Activated CD4-positive, alpha-beta T cell treated with anti-CD3 and anti-CD28 coated beads for 36 hours (primary cell): ENCODE measurements at regions of chr16 and their contacts with region 1.

Region 1: DNA sequence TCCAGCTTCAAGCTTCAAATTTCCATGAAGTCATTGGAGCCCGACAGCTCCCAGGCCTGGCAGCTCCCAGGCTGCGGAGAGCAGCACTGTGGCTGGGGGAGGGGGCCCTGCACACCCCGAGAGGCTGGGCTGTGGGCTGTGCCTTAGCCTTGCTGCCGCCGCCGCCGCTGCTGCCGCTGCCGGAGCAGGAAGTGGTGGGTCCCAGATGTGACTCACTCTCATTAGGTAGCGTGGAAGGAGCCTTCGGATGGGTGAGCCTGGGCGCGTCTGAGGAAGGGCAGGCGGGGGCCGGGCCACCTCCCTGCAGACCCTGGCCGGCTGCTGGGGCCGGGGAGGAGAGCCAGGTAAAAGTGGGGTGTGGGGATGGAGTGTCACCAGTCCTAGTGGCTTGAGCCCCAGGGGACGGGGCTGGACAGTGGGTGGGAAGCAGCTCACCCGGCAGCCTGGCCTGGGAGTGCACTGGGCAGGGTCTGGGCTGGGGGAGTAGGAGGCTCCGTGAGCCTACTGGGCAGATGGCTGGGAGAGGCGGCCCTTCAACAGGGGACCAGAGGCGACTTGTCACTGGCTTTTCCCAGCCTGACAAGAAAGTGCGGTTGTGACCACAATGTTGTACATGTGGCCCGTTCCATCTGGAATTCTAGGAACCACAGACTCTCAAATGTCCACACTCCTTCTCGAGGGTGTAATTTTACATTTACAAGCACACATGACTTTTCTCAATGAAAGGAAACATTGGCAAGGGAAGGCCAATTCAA is at the start of gene ADCY7:
- DNase-seq: peak; percentile 92
- ATAC-seq: peak; percentile 83
- H3K4me3 Mint-ChIP-seq: peak within 1 kb of the TSS; percentile 87
- H3K27ac Mint-ChIP-seq: peak within 1 kb of the TSS; percentile 98
- H3K4me1 Mint-ChIP-seq: peaks cover 70% of the 10 kb centered on the region
- H3K27me3 Mint-ChIP-seq: no peaks in the 10 kb centered on the region
- total RNA-seq, gene ADCY7: 51.8 to 85.3 TPM

Region 2: GRCh38 chr16:50065624-50066481 is 200.7 kb before region 1 on chr16 and contains the start of gene HEATR3:
- CTCF ChIA-PET with region 1: interaction called, 3 read pairs
- POLR2A ChIA-PET with region 1: no interaction called
- intact Hi-C with region 1: loop called in 1 of 2 experiments (anchors 2 kb)
- DNase-seq: peak; percentile 97
- ATAC-seq: peak; percentile 86
- H3K4me3 Mint-ChIP-seq: peak within 1 kb of the TSS; percentile 87
- H3K27ac Mint-ChIP-seq: peak within 1 kb of the TSS; percentile 88
- H3K4me1 Mint-ChIP-seq: peaks cover 33% of the 10 kb centered on the region
- H3K27me3 Mint-ChIP-seq: no peaks in the 10 kb centered on the region
- total RNA-seq, gene HEATR3: 22.2 to 28.7 TPM

Region 3: DNA sequence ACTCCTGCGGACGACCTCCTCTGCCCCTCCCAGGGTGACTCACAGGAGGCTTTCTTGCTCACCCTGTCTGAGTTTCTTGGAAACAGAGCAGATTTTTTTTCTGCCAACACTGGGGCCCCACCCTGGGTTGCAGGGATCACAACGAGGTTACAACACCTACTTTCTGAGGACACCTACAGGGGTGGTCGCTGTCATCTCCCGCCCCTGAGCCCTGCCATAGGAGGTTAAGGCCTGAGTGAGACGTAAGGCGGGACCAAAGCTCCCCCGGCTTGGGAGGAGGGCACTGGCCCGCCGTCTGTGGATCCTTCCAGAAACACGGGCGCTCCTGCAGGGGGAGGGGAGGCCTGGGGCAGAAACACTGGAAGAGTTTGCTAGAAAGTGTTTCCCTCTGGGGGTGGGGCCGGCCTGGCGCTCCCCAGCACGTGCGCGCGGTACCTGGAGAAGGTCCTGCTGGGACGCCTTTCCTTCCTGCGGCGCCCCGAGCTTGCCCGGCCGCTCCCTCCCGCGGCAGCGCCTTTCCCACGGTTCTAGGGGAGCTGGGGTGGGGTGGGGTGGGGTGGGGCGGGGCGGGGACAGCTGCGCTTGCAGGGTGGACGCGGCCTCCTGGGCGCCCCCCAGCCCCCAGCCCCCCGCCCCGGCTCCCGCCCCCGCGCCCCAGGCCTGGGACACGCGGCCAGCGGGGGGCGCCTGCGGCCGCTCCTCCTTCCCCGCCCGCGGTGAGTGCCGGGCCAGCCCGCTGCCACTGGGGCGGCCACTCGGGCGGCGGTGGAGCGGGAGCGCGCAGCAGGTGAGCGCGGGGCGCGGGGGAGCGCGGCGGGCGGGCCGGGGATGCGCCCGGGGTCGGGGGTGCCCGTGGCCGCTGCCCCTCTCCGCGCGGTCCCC is 20.9 kb before region 1 on chr16:
- CTCF ChIA-PET with region 1: interaction called, 3 read pairs
- POLR2A ChIA-PET with region 1: no interaction called
- intact Hi-C with region 1: loop called in 1 of 2 experiments (anchors 1 kb)
- DNase-seq: peak; percentile 83
- ATAC-seq: peak; percentile 91
- H3K4me3 Mint-ChIP-seq: peak overlapping the region; percentile 76
- H3K27ac Mint-ChIP-seq: peak overlapping the region; percentile 83
- H3K4me1 Mint-ChIP-seq: peaks cover 16% of the 10 kb centered on the region
- H3K27me3 Mint-ChIP-seq: no peaks in the 10 kb centered on the region

Region 4: GRCh38 chr16:50473356-50473945 is 206.9 kb after region 1 on chr16:
- CTCF ChIA-PET with region 1: no interaction called
- POLR2A ChIA-PET with region 1: no interaction called
- intact Hi-C with region 1: loop called in 1 of 2 experiments (anchors 5 kb)
- DNase-seq: peak; percentile 54
- ATAC-seq: peak; percentile 82
- H3K4me3 Mint-ChIP-seq: no peak overlapping the region
- H3K27ac Mint-ChIP-seq: peak overlapping the region; percentile 55
- H3K4me1 Mint-ChIP-seq: peaks cover 26% of the 10 kb centered on the region
- H3K27me3 Mint-ChIP-seq: peaks cover 3% of the 10 kb centered on the region

Region 5: GRCh38 chr16:50671644-50672260 is 405.2 kb after region 1 on chr16:
- CTCF ChIA-PET with region 1: no interaction called
- POLR2A ChIA-PET with region 1: no interaction called
- intact Hi-C with region 1: no loop called
- DNase-seq: peak; percentile 80
- ATAC-seq: no peak
- H3K4me3 Mint-ChIP-seq: no peak overlapping the region
- H3K27ac Mint-ChIP-seq: peak overlapping the region; percentile 71
- H3K4me1 Mint-ChIP-seq: peaks cover 30% of the 10 kb centered on the region
- H3K27me3 Mint-ChIP-seq: no peaks in the 10 kb centered on the region